Psoas muscle (tissue), 8 donors: ENCODE measurements at regions of chr11 and their contacts with region 1.

Region 1: GRCh38 chr11:86688398-86689179 is 16.2 kb upstream of the ME3 start:
- DNase-seq: no peak
- ATAC-seq: peak; percentile 91 to 98 (median 94)
- H3K4me3 ChIP-seq: no peak overlapping the region
- H3K27ac ChIP-seq: peak overlapping the region; percentile 88
- H3K4me1 ChIP-seq: peaks cover 34% of the 10 kb centered on the region
- H3K27me3 ChIP-seq: no peaks in the 10 kb centered on the region
- CTCF ChIP-seq: no peak

Region 2: GRCh38 chr11:86802601-86803051 is 114.0 kb after region 1 on chr11:
- intact Hi-C with region 1: loop called in 1 of 2 experiments (anchors 5 kb)
- DNase-seq: no peak
- ATAC-seq: peak in 1 of 4 donors; percentile 48
- H3K4me3 ChIP-seq: peak overlapping the region; percentile 78
- H3K27ac ChIP-seq: no peak overlapping the region
- H3K4me1 ChIP-seq: peaks cover 15% of the 10 kb centered on the region
- H3K27me3 ChIP-seq: no peaks in the 10 kb centered on the region
- CTCF ChIP-seq: peak; percentile 60